ENCODE measurements at regions of chr16 and their contacts with region 1.

Region 1: DNA sequence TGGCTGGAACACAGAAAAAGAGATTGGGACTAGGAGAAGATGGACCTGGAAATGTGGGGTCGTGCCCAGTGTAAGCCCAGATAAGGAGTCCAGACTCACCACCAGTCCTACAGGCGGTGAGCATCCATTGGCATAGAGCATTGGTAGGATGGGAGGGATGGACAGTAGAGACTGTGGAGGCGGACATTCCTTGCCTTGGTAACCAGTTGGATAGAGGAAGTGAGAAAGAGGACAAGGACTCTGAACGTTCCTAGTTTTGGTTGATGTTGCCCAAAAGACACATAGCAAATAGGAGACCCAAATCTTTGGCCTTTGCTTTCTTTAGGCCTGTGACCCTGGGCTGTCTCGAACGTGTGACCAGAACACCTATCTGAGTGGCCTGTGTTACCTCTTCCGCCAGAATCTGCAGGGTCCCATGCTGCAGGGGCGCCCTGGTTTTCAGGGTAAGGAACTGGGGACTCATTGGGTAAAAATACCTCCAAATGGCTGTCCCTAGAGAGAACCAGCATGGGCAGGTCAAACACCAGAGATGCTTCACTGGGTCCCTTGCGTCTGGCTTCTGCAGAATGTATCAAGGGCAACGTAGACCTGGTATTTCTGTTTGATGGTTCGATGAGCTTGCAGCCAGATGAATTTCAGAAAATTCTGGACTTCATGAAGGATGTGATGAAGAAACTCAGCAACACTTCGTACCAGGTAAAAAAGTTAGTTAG is 6.4 kb downstream of the ITGAL start:
- DNase-seq: no peak
- H3K4me3 ChIP-seq: no peak overlapping the region
- H3K27ac ChIP-seq: no peak overlapping the region
- H3K4me1 ChIP-seq: no peaks in the 10 kb centered on the region
- H3K27me3 ChIP-seq: no peaks in the 10 kb centered on the region
- CTCF ChIP-seq: no peak

Region 2: DNA sequence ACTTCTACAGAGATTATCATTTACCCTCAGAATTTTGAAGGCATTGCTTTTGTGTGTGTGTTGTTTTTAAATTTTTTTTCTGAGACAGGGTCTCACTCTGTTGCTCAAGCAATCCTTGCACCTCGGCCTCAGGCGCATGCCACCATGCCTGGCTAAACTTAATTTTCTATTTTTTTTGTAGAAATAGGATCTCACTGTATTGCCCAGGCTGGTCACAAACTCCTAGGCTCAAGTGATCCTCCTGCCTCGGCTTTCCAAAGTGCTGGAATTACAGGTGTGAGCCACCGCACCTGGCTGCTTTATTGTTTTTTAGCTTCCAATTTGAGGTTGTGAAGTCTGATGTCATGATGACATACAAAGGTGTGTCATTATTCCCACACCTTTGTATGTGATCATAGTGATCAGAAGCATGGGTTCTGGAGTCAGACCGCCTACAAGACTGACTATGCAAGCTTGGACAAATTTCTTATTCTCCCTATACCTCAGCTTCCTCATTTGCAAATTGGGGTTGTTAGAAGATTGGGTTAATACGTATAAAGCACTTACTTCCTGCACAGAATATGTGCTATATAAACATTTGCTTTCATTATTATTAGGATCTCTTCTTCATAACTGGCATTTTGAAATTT is 39.1 kb before region 1 on chr16:
- CTCF ChIA-PET with region 1: no interaction called
- dilution Hi-C with region 1: loop called (anchors 5 kb)
- in situ Hi-C with region 1: no loop called
- intact Hi-C with region 1: no loop called
- DNase-seq: no peak
- H3K4me3 ChIP-seq: no peak overlapping the region
- H3K27ac ChIP-seq: no peak overlapping the region
- H3K4me1 ChIP-seq: peaks cover 6% of the 10 kb centered on the region
- H3K27me3 ChIP-seq: no peaks in the 10 kb centered on the region
- CTCF ChIP-seq: no peak

Region 3: GRCh38 chr16:30519120-30520049 is 40.5 kb after region 1 on chr16:
- CTCF ChIA-PET with region 1: no interaction called
- dilution Hi-C with region 1: loop called (anchors 5 kb)
- in situ Hi-C with region 1: no loop called
- intact Hi-C with region 1: no loop called
- DNase-seq: no peak
- H3K4me3 ChIP-seq: no peak overlapping the region
- H3K27ac ChIP-seq: no peak overlapping the region
- H3K4me1 ChIP-seq: no peaks in the 10 kb centered on the region
- H3K27me3 ChIP-seq: no peaks in the 10 kb centered on the region
- CTCF ChIP-seq: no peak

Region 4: DNA sequence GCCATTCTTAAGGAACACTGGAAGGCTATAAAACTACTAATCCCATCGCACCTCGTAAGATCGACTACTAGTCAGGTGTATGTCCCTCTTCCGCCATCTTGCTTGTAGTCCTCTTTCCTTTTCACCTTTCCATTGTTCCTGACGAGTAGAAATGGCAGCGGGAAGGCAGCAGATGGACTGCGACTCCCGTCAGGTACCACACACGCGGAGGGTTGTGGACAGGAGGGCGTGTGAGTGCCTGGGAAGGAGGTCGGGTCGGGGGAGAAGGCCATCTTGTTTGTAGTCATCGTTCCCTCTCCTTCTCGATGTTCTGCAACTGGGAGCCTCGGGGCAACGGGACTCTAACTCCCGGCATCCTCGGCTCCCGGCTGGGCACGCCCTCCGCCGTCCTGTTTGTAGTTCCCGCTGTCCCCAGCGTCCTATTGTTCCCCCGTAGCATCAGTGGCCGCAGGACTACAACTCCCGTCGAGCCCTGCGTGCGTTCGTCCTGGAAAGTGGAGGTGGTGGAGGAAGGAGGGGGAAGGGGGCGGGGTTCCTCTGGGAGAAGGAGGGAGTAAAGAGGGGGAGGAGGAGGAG is 444.1 kb after region 1 on chr16:
- CTCF ChIA-PET with region 1: no interaction called
- dilution Hi-C with region 1: no loop called
- in situ Hi-C with region 1: no loop called
- intact Hi-C with region 1: no loop called
- DNase-seq: peak; percentile 100
- H3K4me3 ChIP-seq: peak overlapping the region; percentile 54 to 76 (median 70)
- H3K27ac ChIP-seq: peak overlapping the region; percentile 94
- H3K4me1 ChIP-seq: peaks cover 11% of the 10 kb centered on the region
- H3K27me3 ChIP-seq: no peaks in the 10 kb centered on the region
- CTCF ChIP-seq: no peak